ENCODE measurements at regions of chr3 and their contacts with region 1.

Region 1: DNA sequence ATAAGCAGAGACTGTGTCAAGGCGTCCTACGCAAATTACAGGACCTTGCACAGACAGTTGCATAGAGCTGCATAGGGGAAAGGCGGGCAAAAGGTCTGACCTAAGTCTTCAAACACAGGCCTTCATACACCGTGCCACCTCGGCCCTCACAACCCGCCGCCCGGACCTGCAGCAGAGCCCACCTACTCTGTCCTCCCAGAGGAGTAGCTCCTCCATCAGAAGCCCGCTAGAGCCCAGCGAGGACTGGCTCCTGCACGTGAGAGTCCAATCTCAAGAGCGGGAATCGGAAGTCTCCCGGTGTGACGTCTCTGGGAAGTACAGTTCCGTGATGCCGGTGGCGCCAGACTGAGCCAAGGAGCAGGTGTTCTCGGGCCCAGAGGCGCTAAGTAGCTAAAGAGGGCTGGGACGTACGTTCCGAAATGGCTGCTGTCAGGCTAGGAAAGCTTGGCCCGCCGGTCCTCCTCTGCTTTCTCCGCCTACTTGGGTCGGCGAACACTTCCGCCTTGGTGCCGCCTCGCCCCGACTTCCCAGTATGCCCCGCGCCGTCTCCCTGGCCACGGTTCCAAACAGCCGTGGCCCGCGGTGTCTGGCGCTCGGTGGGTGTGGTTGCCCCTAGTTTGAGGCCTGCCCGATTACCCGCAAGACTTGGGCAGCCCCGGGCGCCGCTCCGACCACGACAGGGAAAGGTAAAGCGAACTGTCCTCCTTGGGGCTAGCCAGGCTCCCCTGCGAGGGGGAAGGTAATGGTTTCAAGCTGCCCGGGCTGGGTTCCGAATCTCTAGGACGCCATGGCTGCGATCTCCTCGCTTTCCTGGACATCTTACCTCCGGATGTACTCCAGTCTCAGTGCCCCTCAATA is at the starts of genes ASTE1 and NEK11:
- DNase-seq: peak; percentile 89 to 95
- ATAC-seq: peak; percentile 96 to 99 (median 96)
- H3K4me3 ChIP-seq: peak within 1 kb of the TSS; percentile 97
- H3K4me3 Mint-ChIP-seq: peak within 1 kb of the TSS; percentile 97
- H3K27ac ChIP-seq: peak within 1 kb of the TSS; percentile 98
- H3K27ac Mint-ChIP-seq: peak within 1 kb of the TSS; percentile 97 to 98
- H3K4me1 ChIP-seq: peaks cover 20% of the 10 kb centered on the region
- H3K4me1 Mint-ChIP-seq: peaks cover 44 to 51% of the 10 kb centered on the region in 2 donors
- H3K27me3 ChIP-seq: no peaks in the 10 kb centered on the region
- H3K27me3 Mint-ChIP-seq: no peaks in the 10 kb centered on the region
- CTCF ChIP-seq: no peak
- total RNA-seq, gene ASTE1: 22.8 to 28.8 (median 24.3) TPM
- total RNA-seq, gene NEK11: 2.6 to 3.6 (median 3.5) TPM

Region 2: GRCh38 chr3:131502530-131503245 is 476.1 kb after region 1 on chr3 and contains the start of gene MRPL3:
- intact Hi-C with region 1: loop called (anchors 2 kb)
- DNase-seq: peak; percentile 79 to 92
- ATAC-seq: peak; percentile 94 to 96 (median 96)
- H3K4me3 ChIP-seq: peak within 1 kb of the TSS; percentile 98
- H3K4me3 Mint-ChIP-seq: peak within 1 kb of the TSS; percentile 98
- H3K27ac ChIP-seq: peak within 1 kb of the TSS; percentile 83
- H3K27ac Mint-ChIP-seq: peak within 1 kb of the TSS; percentile 97 to 99
- H3K4me1 ChIP-seq: peaks cover 9% of the 10 kb centered on the region
- H3K4me1 Mint-ChIP-seq: peaks cover 22 to 46% of the 10 kb centered on the region in 2 donors
- H3K27me3 ChIP-seq: peaks cover 3% of the 10 kb centered on the region
- H3K27me3 Mint-ChIP-seq: peaks cover 0 to 6% of the 10 kb centered on the region in 2 donors
- CTCF ChIP-seq: no peak
- total RNA-seq, gene MRPL3: 25.9 to 42.2 (median 29.7) TPM

Region 3: GRCh38 chr3:132416807-132417694 is 1390.5 kb after region 1 on chr3 and contains the start of gene DNAJC13:
- intact Hi-C with region 1: loop called (anchors 10 kb)
- DNase-seq: peak; percentile 85 to 97
- ATAC-seq: peak; percentile 92 to 97 (median 94)
- H3K4me3 ChIP-seq: peak within 1 kb of the TSS; percentile 98
- H3K4me3 Mint-ChIP-seq: peak within 1 kb of the TSS; percentile 99
- H3K27ac ChIP-seq: peak within 1 kb of the TSS; percentile 82
- H3K27ac Mint-ChIP-seq: peak within 1 kb of the TSS; percentile 84 to 95
- H3K4me1 ChIP-seq: peaks cover 10% of the 10 kb centered on the region
- H3K4me1 Mint-ChIP-seq: peaks cover 15 to 22% of the 10 kb centered on the region in 2 donors
- H3K27me3 ChIP-seq: no peaks in the 10 kb centered on the region
- H3K27me3 Mint-ChIP-seq: peaks cover 1 to 4% of the 10 kb centered on the region in 2 donors
- CTCF ChIP-seq: no peak
- total RNA-seq, gene DNAJC13: 30.5 to 44.0 (median 42.9) TPM